ENCODE measurements at regions of chr14 and their contacts with region 1.

Region 1: GRCh38 chr14:69129264-69129880 is 23.5 kb downstream of the DCAF5 start:
- DNase-seq: peak; percentile 67
- ATAC-seq: peak; percentile 77

Region 2: DNA sequence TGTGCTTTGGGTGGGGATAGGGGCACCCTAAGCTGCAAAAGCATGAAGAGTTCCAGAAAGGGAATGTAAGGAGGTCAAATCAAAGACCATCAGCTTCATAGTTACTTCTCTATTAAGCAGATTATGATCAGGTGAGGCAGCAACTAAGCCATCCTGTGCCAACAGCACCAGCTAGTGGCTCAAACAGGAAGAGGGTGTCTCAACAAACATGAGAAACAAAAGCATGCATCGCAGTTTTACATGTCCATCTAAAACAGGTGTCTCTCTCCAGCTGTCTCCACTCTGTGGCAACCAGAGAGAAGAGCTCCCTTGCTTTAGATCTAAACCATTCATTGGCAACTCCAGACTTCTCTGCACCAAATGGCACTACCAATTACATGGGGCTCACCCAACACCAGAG is 203.1 kb before region 1 on chr14:
- intact Hi-C with region 1: no loop called
- DNase-seq: no peak
- ATAC-seq: no peak

Region 3: GRCh38 chr14:69191340-69192111 is 62.2 kb after region 1 on chr14 and contains the start of gene EXD2:
- intact Hi-C with region 1: loop called (anchors 10 kb)
- DNase-seq: peak; percentile 90
- ATAC-seq: peak; percentile 99
- total RNA-seq, gene EXD2: 17.7 TPM

Region 4: DNA sequence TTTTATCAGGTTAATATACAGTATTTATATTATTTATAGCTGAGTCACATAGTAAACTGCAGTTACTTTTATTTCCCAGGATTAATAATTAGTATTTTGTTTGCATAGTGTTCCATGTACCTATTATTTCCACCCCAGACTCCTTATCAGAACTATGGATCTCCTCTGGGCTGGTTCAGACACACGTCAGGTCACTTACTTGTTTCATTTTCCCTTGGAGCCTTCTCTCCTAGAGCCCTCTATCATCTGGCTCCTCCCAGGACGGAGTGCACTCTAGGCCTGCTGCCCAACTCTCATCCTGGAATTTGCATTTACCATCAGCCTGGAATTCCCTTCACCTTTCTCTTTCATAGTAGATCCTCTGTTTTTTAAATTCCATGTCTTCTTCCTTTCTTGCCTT is 102.1 kb after region 1 on chr14:
- intact Hi-C with region 1: loop called (anchors 10 kb)
- DNase-seq: no peak
- ATAC-seq: peak; percentile 76

Region 5: GRCh38 chr14:69317104-69317755 is 187.9 kb after region 1 on chr14:
- intact Hi-C with region 1: no loop called
- DNase-seq: peak; percentile 57
- ATAC-seq: peak; percentile 93

Measured in left ventricle myocardium superior (tissue), 1 donor.